Calu3 (cell line): ENCODE measurements at regions of chr1 and their contacts with region 1.

Region 1: DNA sequence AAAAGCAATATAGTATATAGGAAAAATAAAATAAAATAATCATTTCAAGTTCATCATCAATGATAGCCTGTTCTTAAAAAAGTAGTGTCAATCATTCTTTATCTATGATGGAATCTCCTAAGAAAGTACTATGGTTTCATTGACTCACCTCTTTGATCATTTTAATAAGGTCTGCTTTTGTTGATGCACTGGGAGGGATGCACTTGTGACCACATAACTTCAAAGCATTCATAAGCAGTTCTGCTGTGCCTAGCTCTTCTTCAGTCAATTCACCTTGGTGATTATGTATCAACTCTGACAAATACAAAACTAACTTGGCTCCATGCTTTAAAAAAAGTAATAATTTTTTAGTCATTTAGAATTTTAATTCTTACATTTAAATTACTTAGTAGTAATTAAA is 84.8 kb upstream of the GNG4 start:
- DNase-seq: no peak
- H3K4me3 Mint-ChIP-seq: no peak overlapping the region
- H3K27ac Mint-ChIP-seq: no peak overlapping the region
- H3K4me1 Mint-ChIP-seq: no peaks in the 10 kb centered on the region
- H3K27me3 Mint-ChIP-seq: no peaks in the 10 kb centered on the region
- CTCF ChIP-seq: no peak

Region 2: DNA sequence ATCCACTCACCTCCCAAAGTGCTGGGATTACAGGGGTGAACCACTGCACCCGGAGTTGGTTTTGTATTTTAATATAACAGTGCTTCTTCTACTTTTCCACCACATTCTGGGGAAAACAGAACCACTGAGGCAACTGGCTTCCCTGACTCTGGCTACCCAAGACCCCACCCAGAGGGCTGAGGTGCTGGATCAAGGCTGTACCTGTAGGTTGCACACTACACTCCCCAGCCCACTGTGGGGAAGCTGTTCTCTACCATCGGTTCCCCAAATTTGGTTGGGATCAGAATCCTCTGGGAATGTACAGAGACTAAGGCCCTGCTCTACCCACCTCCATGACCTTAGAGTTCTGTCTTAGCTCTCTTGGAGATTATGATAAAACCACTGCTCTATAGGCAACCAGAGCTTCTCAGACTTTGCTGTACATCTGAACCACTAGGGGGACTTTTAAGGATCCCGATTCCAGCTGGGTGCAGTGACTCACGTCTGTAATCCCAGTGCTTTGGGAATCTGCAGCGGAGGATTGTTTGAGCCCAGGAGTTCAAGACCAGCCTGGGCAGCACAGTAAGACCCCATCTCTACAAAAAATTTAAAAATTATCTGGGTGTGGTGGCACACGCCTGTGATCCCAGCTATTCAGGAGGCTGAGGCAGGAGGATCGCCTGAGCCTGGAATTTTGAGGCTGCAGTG is 136.3 kb before region 1 on chr1:
- CTCF ChIA-PET with region 1: no interaction called
- intact Hi-C with region 1: loop called (anchors 2 kb)
- DNase-seq: peak; percentile 36
- H3K4me3 Mint-ChIP-seq: no peak overlapping the region
- H3K27ac Mint-ChIP-seq: no peak overlapping the region
- H3K4me1 Mint-ChIP-seq: no peaks in the 10 kb centered on the region
- H3K27me3 Mint-ChIP-seq: no peaks in the 10 kb centered on the region
- CTCF ChIP-seq: peak; percentile 57

Region 3: DNA sequence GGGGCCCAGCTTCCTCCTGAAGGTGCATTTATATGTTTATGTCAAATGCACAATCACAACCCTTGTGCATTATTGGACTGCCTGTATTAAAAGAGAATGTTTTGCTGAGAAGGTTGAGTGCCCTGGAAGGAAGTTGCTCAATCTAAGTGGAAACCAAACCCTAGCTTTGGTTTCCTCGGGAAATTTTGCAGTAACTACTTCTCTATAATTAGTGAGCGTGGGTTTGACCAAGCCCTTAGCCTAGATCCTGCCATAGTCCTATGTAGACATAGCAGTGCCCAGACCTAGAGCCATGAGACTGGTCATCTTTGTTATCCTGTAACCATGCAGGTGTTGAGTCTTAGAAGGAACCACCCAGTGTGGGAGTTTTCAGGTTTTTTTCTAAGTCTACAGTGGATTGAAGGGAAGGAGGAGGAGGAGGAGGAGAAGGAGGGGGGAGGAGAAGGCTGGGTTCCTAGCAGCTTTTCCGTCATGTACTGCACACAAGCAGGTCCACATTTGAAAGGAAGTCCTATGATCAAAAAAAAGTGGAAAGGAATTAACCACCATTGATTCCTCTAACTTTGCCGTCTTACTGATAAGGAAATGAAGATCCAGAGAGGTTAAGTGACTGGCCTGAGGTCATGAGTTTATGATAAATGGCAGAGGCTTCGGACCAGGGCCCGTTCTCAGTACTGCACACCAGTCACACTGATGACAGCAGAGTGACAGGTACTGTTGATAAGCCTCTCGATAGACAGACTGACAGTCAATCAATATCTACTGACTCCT is 204.6 kb after region 1 on chr1:
- CTCF ChIA-PET with region 1: no interaction called
- intact Hi-C with region 1: no loop called
- DNase-seq: no peak
- H3K4me3 Mint-ChIP-seq: no peak overlapping the region
- H3K27ac Mint-ChIP-seq: no peak overlapping the region
- H3K4me1 Mint-ChIP-seq: peaks cover 8% of the 10 kb centered on the region
- H3K27me3 Mint-ChIP-seq: no peaks in the 10 kb centered on the region
- CTCF ChIP-seq: no peak

Region 4: GRCh38 chr1:236142253-236143103 is 408.1 kb after region 1 on chr1 and contains the start of gene GPR137B:
- CTCF ChIA-PET with region 1: no interaction called
- intact Hi-C with region 1: no loop called
- DNase-seq: peak; percentile 53
- H3K4me3 Mint-ChIP-seq: peak within 1 kb of the TSS; percentile 95
- H3K27ac Mint-ChIP-seq: peak within 1 kb of the TSS; percentile 88
- H3K4me1 Mint-ChIP-seq: peaks cover 24% of the 10 kb centered on the region
- H3K27me3 Mint-ChIP-seq: peaks cover 59% of the 10 kb centered on the region
- CTCF ChIP-seq: no peak
- total RNA-seq, gene GPR137B: 9.5 and 11.4 TPM in 2 replicates